K562 (cell line): ENCODE measurements at regions of chr2 and their contacts with region 1.

Region 1: GRCh38 chr2:223815186-223815883 is 22.0 kb downstream of the AP1S3 start:
- DNase-seq: no peak
- ATAC-seq: no peak
- H3K4me3 ChIP-seq: no peak overlapping the region
- H3K27ac ChIP-seq: no peak overlapping the region
- H3K4me1 ChIP-seq: no peaks in the 10 kb centered on the region
- H3K27me3 ChIP-seq: no peaks in the 10 kb centered on the region; a peak in 1 of 5 replicates
- CTCF ChIP-seq: no peak
- EP300 ChIP-seq: no peak
- POLR2A ChIP-seq: no peak
- RAD21 ChIP-seq: no peak

Region 2: GRCh38 chr2:222959336-222959735 is 856.0 kb before region 1 on chr2:
- CTCF ChIA-PET with region 1: no interaction called
- POLR2A ChIA-PET with region 1: no interaction called
- in situ Hi-C with region 1: loop called (anchors 25 kb)
- intact Hi-C with region 1: no loop called
- DNase-seq: no peak
- ATAC-seq: peak; percentile 79
- H3K4me3 ChIP-seq: no peak overlapping the region
- H3K27ac ChIP-seq: no peak overlapping the region
- H3K4me1 ChIP-seq: no peaks in the 10 kb centered on the region
- H3K27me3 ChIP-seq: no peaks in the 10 kb centered on the region
- CTCF ChIP-seq: peak; percentile 19 to 23 (median 20); a peak in 2 of 6 replicates
- EP300 ChIP-seq: no peak
- POLR2A ChIP-seq: no peak
- RAD21 ChIP-seq: peak in 1 of 2 experiments; percentile 44; a peak in 2 of 4 replicates

Region 3: GRCh38 chr2:223760838-223761502 is 54.4 kb before region 1 on chr2:
- CTCF ChIA-PET with region 1: no interaction called
- POLR2A ChIA-PET with region 1: no interaction called
- in situ Hi-C with region 1: no loop called
- intact Hi-C with region 1: no loop called
- DNase-seq: peak in 1 of 4 experiments; percentile 8
- ATAC-seq: peak; percentile 83
- H3K4me3 ChIP-seq: no peak overlapping the region
- H3K27ac ChIP-seq: no peak overlapping the region
- H3K4me1 ChIP-seq: no peaks in the 10 kb centered on the region
- H3K27me3 ChIP-seq: no peaks in the 10 kb centered on the region
- CTCF ChIP-seq: peak in 1 of 3 experiments; percentile 33; a peak in 1 of 6 replicates
- EP300 ChIP-seq: no peak
- POLR2A ChIP-seq: no peak
- RAD21 ChIP-seq: peak in 1 of 2 experiments; percentile 27; a peak in 1 of 4 replicates